H1 (cell line): ENCODE measurements at regions of chr3 and their contacts with region 1.

Region 1: GRCh38 chr3:27659279-27660021 is 62.7 kb downstream of the EOMES start:
- DNase-seq: peak in 1 of 2 experiments; percentile 76
- H3K4me3 ChIP-seq: no peak overlapping the region
- H3K27ac ChIP-seq: no peak overlapping the region
- H3K4me1 ChIP-seq: peaks cover 0 to 4% (median 3%) of the 10 kb centered on the region in 4 experiments; a peak in 3 of 7 replicates
- H3K27me3 ChIP-seq: no peaks in the 10 kb centered on the region
- CTCF ChIP-seq: peak; percentile 78 to 92 (median 89)
- EP300 ChIP-seq: no peak
- POLR2A ChIP-seq: no peak
- RAD21 ChIP-seq: peak; percentile 73 to 79

Region 2: GRCh38 chr3:27623085-27623753 is 36.2 kb before region 1 on chr3:
- CTCF ChIA-PET with region 1: interaction called, 10 read pairs
- POLR2A ChIA-PET with region 1: no interaction called
- DNase-seq: no peak
- H3K4me3 ChIP-seq: no peak overlapping the region
- H3K27ac ChIP-seq: no peak overlapping the region
- H3K4me1 ChIP-seq: peaks cover 0 to 3% (median 0%) of the 10 kb centered on the region in 4 experiments; a peak in 2 of 7 replicates
- H3K27me3 ChIP-seq: no peaks in the 10 kb centered on the region
- CTCF ChIP-seq: no peak
- EP300 ChIP-seq: no peak
- POLR2A ChIP-seq: no peak
- RAD21 ChIP-seq: no peak

Region 3: GRCh38 chr3:27649277-27649676 is 10.2 kb before region 1 on chr3:
- CTCF ChIA-PET with region 1: interaction called, 46 read pairs
- POLR2A ChIA-PET with region 1: no interaction called
- DNase-seq: no peak
- H3K4me3 ChIP-seq: no peak overlapping the region
- H3K27ac ChIP-seq: no peak overlapping the region
- H3K4me1 ChIP-seq: peaks cover 0 to 6% (median 2%) of the 10 kb centered on the region in 4 experiments; a peak in 3 of 7 replicates
- H3K27me3 ChIP-seq: no peaks in the 10 kb centered on the region
- CTCF ChIP-seq: no peak
- EP300 ChIP-seq: no peak
- POLR2A ChIP-seq: no peak
- RAD21 ChIP-seq: no peak

Region 4: DNA sequence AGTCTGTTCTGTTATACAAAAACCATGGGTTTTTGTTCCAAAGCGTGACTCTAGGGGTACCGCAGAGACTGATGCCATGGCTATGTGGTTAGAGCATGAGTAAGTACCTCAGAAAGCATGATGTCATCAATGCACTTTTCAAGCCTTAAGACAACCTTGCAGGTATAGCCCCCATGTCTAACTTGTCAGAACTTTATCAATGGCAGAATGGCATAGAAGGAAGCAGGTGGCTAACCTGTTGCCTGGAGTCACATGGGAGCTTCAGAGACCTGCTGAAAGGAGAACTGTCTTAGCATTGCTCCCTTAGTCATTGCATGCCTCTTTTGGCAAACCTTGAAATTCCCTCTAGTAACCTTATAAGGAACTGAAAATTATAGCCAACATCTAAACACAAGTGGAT is 10.1 kb after region 1 on chr3:
- CTCF ChIA-PET with region 1: interaction called, 30 read pairs
- POLR2A ChIA-PET with region 1: interaction called, 7 read pairs
- DNase-seq: no peak
- H3K4me3 ChIP-seq: no peak overlapping the region
- H3K27ac ChIP-seq: no peak overlapping the region
- H3K4me1 ChIP-seq: peaks cover 0 to 11% (median 5%) of the 10 kb centered on the region in 4 experiments; a peak in 4 of 7 replicates
- H3K27me3 ChIP-seq: no peaks in the 10 kb centered on the region
- CTCF ChIP-seq: no peak
- EP300 ChIP-seq: no peak
- POLR2A ChIP-seq: no peak
- RAD21 ChIP-seq: no peak

Region 5: DNA sequence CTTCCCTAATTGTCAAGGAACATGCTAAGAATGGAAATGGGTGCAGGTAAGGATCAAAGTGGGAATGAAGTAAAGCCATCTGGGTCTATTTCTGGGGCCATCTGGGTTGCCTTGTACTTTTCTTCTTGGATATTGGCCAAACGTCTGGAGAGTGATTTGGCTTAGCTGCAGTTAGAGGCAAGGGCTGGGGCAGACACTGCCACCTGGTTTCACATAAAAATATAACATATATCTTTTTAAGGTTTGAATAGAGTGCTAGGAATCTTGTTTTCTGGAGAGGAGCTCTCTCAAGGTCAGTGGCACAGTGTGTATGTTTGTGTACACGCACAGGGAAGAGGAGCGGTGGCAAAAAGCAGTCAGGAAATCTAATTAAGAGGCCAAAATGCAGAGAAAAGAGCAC is 87.4 kb after region 1 on chr3:
- CTCF ChIA-PET with region 1: no interaction called
- POLR2A ChIA-PET with region 1: no interaction called
- DNase-seq: no peak
- H3K4me3 ChIP-seq: no peak overlapping the region
- H3K27ac ChIP-seq: no peak overlapping the region
- H3K4me1 ChIP-seq: no peaks in the 10 kb centered on the region
- H3K27me3 ChIP-seq: no peaks in the 10 kb centered on the region; a peak in 1 of 7 replicates
- CTCF ChIP-seq: no peak
- EP300 ChIP-seq: no peak
- POLR2A ChIP-seq: no peak
- RAD21 ChIP-seq: no peak

Region 6: GRCh38 chr3:28077572-28077971 is 418.1 kb after region 1 on chr3:
- CTCF ChIA-PET with region 1: no interaction called
- POLR2A ChIA-PET with region 1: no interaction called
- DNase-seq: peak; percentile 50 to 54
- H3K4me3 ChIP-seq: peak overlapping the region in 1 of 4 experiments; percentile 22; a peak in 1 of 8 replicates
- H3K27ac ChIP-seq: no peak overlapping the region
- H3K4me1 ChIP-seq: peaks cover 2 to 23% (median 19%) of the 10 kb centered on the region in 4 experiments; a peak in 4 of 7 replicates
- H3K27me3 ChIP-seq: peaks cover 0 to 1% (median 0%) of the 10 kb centered on the region in 4 experiments; a peak in 1 of 7 replicates
- CTCF ChIP-seq: no peak
- EP300 ChIP-seq: no peak
- POLR2A ChIP-seq: no peak
- RAD21 ChIP-seq: peak in 1 of 2 experiments; percentile 21; a peak in 2 of 4 replicates